HepG2 (cell line): ENCODE measurements at regions of chr11 and their contacts with region 1.

Region 1: DNA sequence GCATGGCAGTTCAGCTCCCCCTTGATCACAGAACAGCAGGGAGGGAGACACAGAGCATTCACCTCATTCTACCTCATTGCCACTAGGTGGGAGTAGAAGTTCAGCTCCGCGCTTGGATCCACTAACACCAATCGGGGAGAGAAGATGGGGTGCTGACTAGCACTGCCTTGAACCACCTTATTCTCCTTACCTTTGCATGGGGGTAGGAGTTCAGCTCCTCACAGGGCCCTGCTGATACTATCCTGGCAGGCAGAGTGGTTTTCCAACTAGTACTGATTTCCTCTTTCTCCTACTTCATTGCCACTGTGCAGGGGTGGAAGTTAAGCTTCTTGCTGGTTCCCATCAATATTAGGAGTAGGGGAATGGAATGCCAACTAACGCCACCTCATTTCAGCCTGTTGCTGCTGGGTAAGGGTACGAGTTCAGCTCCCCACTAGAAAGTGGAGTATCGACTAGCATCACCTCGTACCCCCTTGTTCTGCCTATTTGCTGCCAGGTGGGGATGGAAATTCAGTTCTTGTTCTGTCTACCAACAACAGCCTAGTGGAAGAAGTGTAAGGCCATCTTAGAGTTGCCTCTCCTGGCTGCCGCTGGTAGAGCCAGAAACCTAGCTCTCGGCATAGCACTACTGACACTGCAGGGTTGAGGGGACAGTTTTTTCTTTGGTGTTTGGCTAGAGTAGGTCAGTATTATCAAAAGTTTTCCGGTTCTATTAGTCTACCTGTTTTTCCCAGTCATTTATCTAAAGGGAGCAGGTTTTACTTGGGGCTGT is 550.9 kb upstream of the CCDC90B start:
- DNase-seq: peak; percentile 65
- ATAC-seq: peak; percentile 99
- H3K4me3 ChIP-seq: no peak overlapping the region
- H3K27ac ChIP-seq: no peak overlapping the region
- H3K4me1 ChIP-seq: peaks cover 34% of the 10 kb centered on the region
- H3K27me3 ChIP-seq: no peaks in the 10 kb centered on the region
- CTCF ChIP-seq: peak; percentile 96
- EP300 ChIP-seq: no peak
- POLR2A ChIP-seq: no peak
- RAD21 ChIP-seq: peak; percentile 83

Region 2: DNA sequence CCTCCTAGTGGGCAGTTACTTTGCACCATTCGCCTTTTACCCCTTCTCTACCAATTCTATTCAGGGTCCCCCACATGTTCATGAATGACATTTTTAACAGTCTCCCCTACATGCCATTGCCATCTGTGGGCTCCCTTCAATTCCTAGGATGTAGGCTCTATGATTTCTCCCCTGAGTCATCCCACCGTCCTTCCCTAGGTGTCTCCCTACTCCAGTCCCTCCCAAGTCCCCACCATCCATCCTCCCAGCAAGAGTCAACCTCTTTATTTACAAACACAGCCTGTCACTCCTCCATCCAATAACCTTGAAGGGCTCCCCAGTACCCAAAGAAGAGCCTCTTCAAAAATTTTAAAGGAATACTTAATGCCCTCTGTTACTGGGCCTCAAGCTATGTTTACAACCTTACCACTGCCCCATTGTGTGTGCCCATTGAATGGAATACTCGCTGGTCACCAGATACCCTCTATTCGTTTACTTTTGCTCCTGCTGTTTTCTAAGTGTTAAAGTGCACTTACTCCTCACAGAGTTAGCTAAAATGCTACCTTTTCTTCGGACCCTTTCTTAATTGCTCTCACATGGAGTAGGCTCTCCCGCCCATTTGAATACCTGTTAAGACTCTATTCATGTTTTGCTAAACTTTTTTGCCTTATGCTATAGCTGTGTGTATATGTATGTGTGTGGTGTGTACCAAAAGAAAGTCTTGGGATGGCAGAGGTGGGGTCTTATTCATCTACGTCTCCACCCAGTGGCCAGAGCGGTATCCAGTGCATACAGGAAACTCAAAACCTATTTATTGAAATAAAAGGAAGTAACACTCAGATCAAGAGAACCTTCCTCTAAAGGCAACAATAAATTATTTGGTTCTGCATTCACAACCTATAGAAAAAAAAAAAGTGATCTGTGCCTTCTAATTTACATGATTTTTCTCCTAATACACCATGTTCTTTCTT is 315.1 kb before region 1 on chr11:
- CTCF ChIA-PET with region 1: no interaction called
- POLR2A ChIA-PET with region 1: no interaction called
- in situ Hi-C with region 1: no loop called
- intact Hi-C with region 1: no loop called
- DNase-seq: peak; percentile 15
- ATAC-seq: peak; percentile 83
- H3K4me3 ChIP-seq: no peak overlapping the region
- H3K27ac ChIP-seq: no peak overlapping the region
- H3K4me1 ChIP-seq: peaks cover 17% of the 10 kb centered on the region
- H3K27me3 ChIP-seq: no peaks in the 10 kb centered on the region
- CTCF ChIP-seq: peak; percentile 53
- EP300 ChIP-seq: no peak
- POLR2A ChIP-seq: no peak
- RAD21 ChIP-seq: no peak

Region 3: DNA sequence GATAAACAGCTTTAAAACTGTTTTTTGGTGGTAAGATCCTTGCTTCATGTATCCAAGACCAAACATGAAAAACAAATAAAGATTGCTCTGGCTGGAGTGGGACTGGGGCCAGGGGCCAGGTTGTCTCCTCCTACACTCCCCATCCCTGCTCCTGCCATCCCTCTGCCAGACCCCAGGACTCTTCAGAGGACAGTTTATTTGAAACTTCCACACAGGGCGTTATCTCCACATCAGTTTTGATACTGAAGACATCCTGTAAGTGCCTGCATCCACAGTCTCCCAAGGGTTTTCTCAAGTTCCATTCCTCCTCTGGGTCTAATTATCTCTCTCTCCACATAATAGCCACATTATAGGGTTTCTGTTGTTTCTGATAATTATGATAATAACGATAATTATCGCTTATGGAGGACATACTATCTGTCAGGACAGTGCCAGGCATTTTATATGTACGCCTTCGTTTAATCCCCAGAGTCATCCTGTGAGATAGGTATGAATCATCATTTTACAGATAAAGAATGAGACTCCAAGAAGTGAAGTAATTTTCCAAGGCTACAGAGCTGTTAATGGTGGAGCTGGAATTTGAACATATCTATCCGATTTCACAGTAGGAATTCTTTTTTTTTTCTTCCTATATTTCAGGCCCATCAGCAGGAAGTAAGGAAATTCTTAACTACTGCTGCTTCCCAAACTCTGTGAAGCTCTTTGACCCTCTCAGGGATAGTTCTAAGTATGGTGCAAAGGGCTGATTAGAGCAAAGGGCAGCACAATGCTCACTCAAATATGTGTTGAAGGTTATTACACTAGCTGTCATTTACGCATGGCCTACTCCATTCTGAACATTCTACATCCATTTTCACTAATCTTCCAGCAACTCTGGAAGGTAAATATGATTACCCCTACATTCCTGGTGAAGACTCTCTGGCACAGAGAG is 62.9 kb before region 1 on chr11:
- CTCF ChIA-PET with region 1: no interaction called
- POLR2A ChIA-PET with region 1: no interaction called
- in situ Hi-C with region 1: no loop called
- intact Hi-C with region 1: no loop called
- DNase-seq: no peak
- ATAC-seq: no peak
- H3K4me3 ChIP-seq: no peak overlapping the region
- H3K27ac ChIP-seq: no peak overlapping the region
- H3K4me1 ChIP-seq: no peaks in the 10 kb centered on the region
- H3K27me3 ChIP-seq: no peaks in the 10 kb centered on the region
- CTCF ChIP-seq: no peak
- EP300 ChIP-seq: no peak
- POLR2A ChIP-seq: no peak
- RAD21 ChIP-seq: no peak

Region 4: DNA sequence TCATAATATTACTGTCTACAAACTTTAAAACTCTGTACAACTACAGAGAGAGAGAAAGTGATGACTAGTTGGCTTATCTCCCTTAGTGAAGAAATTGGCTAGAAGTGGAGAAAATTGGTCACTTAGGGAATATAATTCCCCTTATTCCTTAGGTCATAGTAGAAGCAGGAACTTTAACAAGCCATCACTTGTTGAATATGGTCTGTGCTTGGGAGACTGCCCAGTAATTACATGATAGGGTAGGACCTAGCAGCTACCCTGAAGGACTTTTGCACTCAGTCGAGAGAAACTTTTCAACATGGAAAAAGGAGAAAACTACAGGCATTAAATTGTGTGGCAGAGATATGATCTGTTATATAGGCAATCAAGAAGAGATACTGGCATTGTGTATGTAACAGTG is 25.6 kb after region 1 on chr11:
- CTCF ChIA-PET with region 1: no interaction called
- POLR2A ChIA-PET with region 1: no interaction called
- in situ Hi-C with region 1: no loop called
- intact Hi-C with region 1: no loop called
- DNase-seq: no peak
- ATAC-seq: no peak
- H3K4me3 ChIP-seq: no peak overlapping the region
- H3K27ac ChIP-seq: no peak overlapping the region
- H3K4me1 ChIP-seq: no peaks in the 10 kb centered on the region
- H3K27me3 ChIP-seq: no peaks in the 10 kb centered on the region
- CTCF ChIP-seq: no peak
- EP300 ChIP-seq: no peak
- POLR2A ChIP-seq: no peak
- RAD21 ChIP-seq: no peak

Region 5: DNA sequence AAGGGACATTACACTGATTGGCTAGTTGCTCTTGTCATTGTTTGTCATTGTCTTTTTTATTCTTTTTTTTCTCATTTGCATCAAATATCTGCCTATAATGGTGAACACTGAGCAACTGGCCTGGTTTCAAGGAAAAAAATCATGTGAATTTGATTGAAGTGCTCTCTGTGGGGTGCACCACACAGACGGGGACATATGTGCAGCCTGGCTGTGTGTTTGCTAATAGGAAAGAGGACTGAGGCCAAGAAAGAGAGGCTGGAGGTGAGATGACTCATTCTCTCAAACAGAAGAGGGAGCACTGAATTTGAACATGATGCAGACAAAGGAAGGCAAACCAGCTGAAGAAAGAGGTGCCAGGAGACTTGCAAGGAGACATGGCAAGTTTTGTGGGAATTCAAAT is 134.0 kb after region 1 on chr11:
- CTCF ChIA-PET with region 1: no interaction called
- POLR2A ChIA-PET with region 1: no interaction called
- in situ Hi-C with region 1: no loop called
- intact Hi-C with region 1: loop called (anchors 10 kb)
- DNase-seq: no peak
- ATAC-seq: no peak
- H3K4me3 ChIP-seq: no peak overlapping the region
- H3K27ac ChIP-seq: no peak overlapping the region
- H3K4me1 ChIP-seq: no peaks in the 10 kb centered on the region
- H3K27me3 ChIP-seq: no peaks in the 10 kb centered on the region; a peak in 1 of 5 replicates
- CTCF ChIP-seq: no peak
- EP300 ChIP-seq: no peak
- POLR2A ChIP-seq: no peak
- RAD21 ChIP-seq: no peak

Region 6: DNA sequence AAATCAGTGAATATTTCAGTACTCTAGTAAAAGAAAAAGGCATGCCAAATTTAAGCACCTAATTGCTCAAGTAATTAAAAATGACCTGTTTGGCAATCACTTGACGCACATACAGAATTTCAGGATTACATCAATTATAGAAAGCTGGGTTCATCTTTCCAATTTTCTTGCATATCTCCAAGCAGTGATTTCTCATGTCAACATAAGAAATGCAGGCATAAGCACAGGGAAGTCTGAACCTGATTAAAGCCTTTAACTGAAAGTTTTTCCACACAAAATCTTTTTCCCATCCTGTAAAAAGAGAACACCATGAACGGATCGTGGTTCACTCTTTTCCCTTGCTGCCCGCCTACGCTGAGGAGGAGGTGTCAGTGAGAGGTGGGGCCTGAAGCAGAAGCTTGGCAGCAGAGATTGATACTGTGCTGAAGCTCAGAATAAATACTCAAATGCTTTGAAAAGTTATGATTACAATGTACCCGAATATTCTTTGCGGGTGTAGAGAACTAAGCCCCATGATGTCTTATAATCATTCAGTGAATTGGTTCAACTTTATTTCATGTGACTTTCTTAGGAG is 153.2 kb after region 1 on chr11:
- CTCF ChIA-PET with region 1: no interaction called
- POLR2A ChIA-PET with region 1: no interaction called
- in situ Hi-C with region 1: no loop called
- intact Hi-C with region 1: no loop called
- DNase-seq: no peak
- ATAC-seq: no peak
- H3K4me3 ChIP-seq: no peak overlapping the region
- H3K27ac ChIP-seq: no peak overlapping the region
- H3K4me1 ChIP-seq: no peaks in the 10 kb centered on the region
- H3K27me3 ChIP-seq: no peaks in the 10 kb centered on the region
- CTCF ChIP-seq: no peak
- EP300 ChIP-seq: no peak
- POLR2A ChIP-seq: no peak
- RAD21 ChIP-seq: no peak

Region 7: GRCh38 chr11:84146826-84147225 is 309.8 kb after region 1 on chr11:
- CTCF ChIA-PET with region 1: no interaction called
- POLR2A ChIA-PET with region 1: no interaction called
- in situ Hi-C with region 1: no loop called
- intact Hi-C with region 1: loop called (anchors 5 kb)
- DNase-seq: no peak
- ATAC-seq: peak; percentile 34; the same call in 1 of the 3 replicates
- H3K4me3 ChIP-seq: no peak overlapping the region
- H3K27ac ChIP-seq: no peak overlapping the region
- H3K4me1 ChIP-seq: no peaks in the 10 kb centered on the region
- H3K27me3 ChIP-seq: no peaks in the 10 kb centered on the region
- CTCF ChIP-seq: no peak
- EP300 ChIP-seq: no peak
- POLR2A ChIP-seq: no peak
- RAD21 ChIP-seq: no peak

Region 8: GRCh38 chr11:84261707-84262106 is 424.6 kb after region 1 on chr11:
- CTCF ChIA-PET with region 1: interaction called, 6 read pairs
- POLR2A ChIA-PET with region 1: no interaction called
- in situ Hi-C with region 1: loop called (anchors 10 kb)
- intact Hi-C with region 1: loop called (anchors 1 kb)
- DNase-seq: no peak
- ATAC-seq: peak; percentile 73
- H3K4me3 ChIP-seq: no peak overlapping the region
- H3K27ac ChIP-seq: no peak overlapping the region
- H3K4me1 ChIP-seq: no peaks in the 10 kb centered on the region
- H3K27me3 ChIP-seq: no peaks in the 10 kb centered on the region
- CTCF ChIP-seq: peak; percentile 44
- EP300 ChIP-seq: no peak
- POLR2A ChIP-seq: no peak
- RAD21 ChIP-seq: no peak

Region 9: DNA sequence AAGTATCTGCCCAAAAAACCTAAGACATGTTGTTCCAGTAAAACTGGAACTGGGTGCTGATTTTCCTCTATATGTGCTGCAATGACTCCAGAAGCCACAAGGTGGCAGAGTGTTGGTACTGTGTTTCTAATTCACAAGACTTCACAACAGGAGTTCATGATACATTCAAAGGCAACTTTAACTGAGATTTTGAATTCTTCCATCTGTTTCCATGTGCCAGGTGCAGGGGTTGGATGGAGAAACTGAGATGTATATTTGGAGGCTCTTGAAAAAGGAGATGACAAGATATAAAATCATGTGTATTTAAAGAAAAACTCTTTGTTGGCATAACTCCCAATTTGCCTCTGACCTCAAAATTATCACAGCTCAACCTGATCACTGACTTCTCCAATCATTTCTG is 547.7 kb after region 1 on chr11:
- CTCF ChIA-PET with region 1: no interaction called
- POLR2A ChIA-PET with region 1: no interaction called
- in situ Hi-C with region 1: loop called (anchors 10 kb)
- intact Hi-C with region 1: loop called (anchors 1 kb)
- DNase-seq: peak; percentile 30
- ATAC-seq: no peak
- H3K4me3 ChIP-seq: no peak overlapping the region
- H3K27ac ChIP-seq: no peak overlapping the region
- H3K4me1 ChIP-seq: no peaks in the 10 kb centered on the region
- H3K27me3 ChIP-seq: no peaks in the 10 kb centered on the region
- CTCF ChIP-seq: peak; percentile 62
- EP300 ChIP-seq: no peak
- POLR2A ChIP-seq: no peak
- RAD21 ChIP-seq: no peak

Region 10: GRCh38 chr11:84524422-84525051 is 687.5 kb after region 1 on chr11:
- CTCF ChIA-PET with region 1: no interaction called
- POLR2A ChIA-PET with region 1: no interaction called
- in situ Hi-C with region 1: loop called (anchors 25 kb)
- intact Hi-C with region 1: loop called (anchors 1 kb)
- DNase-seq: no peak
- ATAC-seq: no peak
- H3K4me3 ChIP-seq: no peak overlapping the region
- H3K27ac ChIP-seq: no peak overlapping the region
- H3K4me1 ChIP-seq: no peaks in the 10 kb centered on the region
- H3K27me3 ChIP-seq: no peaks in the 10 kb centered on the region
- CTCF ChIP-seq: peak; percentile 26
- EP300 ChIP-seq: no peak
- POLR2A ChIP-seq: no peak
- RAD21 ChIP-seq: no peak

Region 11: GRCh38 chr11:84564180-84564866 is 727.3 kb after region 1 on chr11:
- CTCF ChIA-PET with region 1: no interaction called
- POLR2A ChIA-PET with region 1: no interaction called
- in situ Hi-C with region 1: no loop called
- intact Hi-C with region 1: loop called (anchors 10 kb)
- DNase-seq: peak; percentile 77
- ATAC-seq: peak; percentile 92
- H3K4me3 ChIP-seq: peak overlapping the region in 1 of 3 experiments; percentile 14; a peak in 1 of 6 replicates
- H3K27ac ChIP-seq: peak overlapping the region; percentile 36
- H3K4me1 ChIP-seq: peaks cover 13% of the 10 kb centered on the region
- H3K27me3 ChIP-seq: no peaks in the 10 kb centered on the region
- CTCF ChIP-seq: peak; percentile 77
- EP300 ChIP-seq: no peak
- POLR2A ChIP-seq: peak in 1 of 2 experiments; percentile 35; a peak in 1 of 4 replicates
- RAD21 ChIP-seq: peak; percentile 55; the same call in 1 of the 2 replicates